GM12878 (cell line): ENCODE measurements at regions of chr17 and their contacts with region 1.

Region 1: DNA sequence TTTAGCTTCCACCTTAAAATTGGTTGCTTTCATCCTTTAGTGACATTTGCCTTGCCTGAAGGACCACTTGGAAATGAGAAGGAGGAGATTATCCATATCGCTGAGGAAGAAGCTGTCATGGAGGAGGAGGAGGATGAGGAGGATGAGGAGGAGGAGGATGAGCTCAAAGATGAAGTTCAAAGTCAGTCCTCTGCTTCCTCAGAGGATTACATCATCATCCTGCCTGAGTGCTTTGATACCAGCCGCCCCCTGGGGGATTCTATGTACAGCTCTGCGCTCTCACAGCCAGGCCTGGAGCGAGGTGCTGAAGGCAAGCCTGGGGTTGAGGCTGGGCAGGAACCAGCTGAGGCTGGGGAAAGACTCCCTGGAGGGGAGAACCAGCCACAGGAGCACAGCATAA is 11.5 kb upstream of the TMEM106A start:
- DNase-seq: no peak
- ATAC-seq: no peak
- H3K4me3 ChIP-seq: no peak overlapping the region
- H3K27ac ChIP-seq: no peak overlapping the region
- H3K4me1 ChIP-seq: no peaks in the 10 kb centered on the region
- H3K27me3 ChIP-seq: no peaks in the 10 kb centered on the region
- CTCF ChIP-seq: no peak
- EP300 ChIP-seq: no peak
- POLR2A ChIP-seq: no peak
- RAD21 ChIP-seq: no peak

Region 2: GRCh38 chr17:43033948-43034881 is 165.9 kb before region 1 on chr17:
- CTCF ChIA-PET with region 1: no interaction called
- POLR2A ChIA-PET with region 1: no interaction called
- RAD21 ChIA-PET with region 1: no interaction called
- SMC1A ChIA-PET with region 1: no interaction called
- in situ Hi-C with region 1: no loop called
- intact Hi-C with region 1: no loop called
- DNase-seq: no peak
- ATAC-seq: no peak
- H3K4me3 ChIP-seq: no peak overlapping the region
- H3K27ac ChIP-seq: no peak overlapping the region
- H3K4me1 ChIP-seq: no peaks in the 10 kb centered on the region
- H3K27me3 ChIP-seq: no peaks in the 10 kb centered on the region
- CTCF ChIP-seq: no peak
- EP300 ChIP-seq: no peak
- POLR2A ChIP-seq: no peak
- RAD21 ChIP-seq: no peak

Region 3: GRCh38 chr17:43151880-43152456 is 48.2 kb before region 1 on chr17:
- CTCF ChIA-PET with region 1: no interaction called
- POLR2A ChIA-PET with region 1: no interaction called
- RAD21 ChIA-PET with region 1: no interaction called
- SMC1A ChIA-PET with region 1: no interaction called
- in situ Hi-C with region 1: loop called (anchors 10 kb)
- intact Hi-C with region 1: no loop called
- DNase-seq: no peak
- ATAC-seq: peak; percentile 32; the same call in 1 of the 3 replicates
- H3K4me3 ChIP-seq: no peak overlapping the region
- H3K27ac ChIP-seq: no peak overlapping the region
- H3K4me1 ChIP-seq: no peaks in the 10 kb centered on the region
- H3K27me3 ChIP-seq: no peaks in the 10 kb centered on the region
- CTCF ChIP-seq: no peak
- EP300 ChIP-seq: no peak
- POLR2A ChIP-seq: no peak
- RAD21 ChIP-seq: no peak

Region 4: GRCh38 chr17:43546319-43547188 is 346.4 kb after region 1 on chr17 and contains the start of gene ETV4:
- CTCF ChIA-PET with region 1: no interaction called
- POLR2A ChIA-PET with region 1: no interaction called
- RAD21 ChIA-PET with region 1: no interaction called
- SMC1A ChIA-PET with region 1: no interaction called
- in situ Hi-C with region 1: no loop called
- intact Hi-C with region 1: no loop called
- DNase-seq: peak; percentile 55
- ATAC-seq: peak; percentile 93
- H3K4me3 ChIP-seq: peak within 1 kb of the TSS; percentile 74
- H3K27ac ChIP-seq: no peak within 1 kb of the TSS
- H3K4me1 ChIP-seq: peaks cover 3% of the 10 kb centered on the region; the same call in 1 of the 2 replicates
- H3K27me3 ChIP-seq: peaks cover 0 to 4% of the 10 kb centered on the region in 2 experiments; a peak in 2 of 4 replicates
- CTCF ChIP-seq: no peak
- EP300 ChIP-seq: no peak
- POLR2A ChIP-seq: no peak; the same call in 1 of the 2 replicates
- RAD21 ChIP-seq: no peak
- polyA plus RNA-seq, gene ETV4: 0.19 to 0.49 TPM

Region 5: GRCh38 chr17:43840814-43841213 is 640.7 kb after region 1 on chr17:
- CTCF ChIA-PET with region 1: no interaction called
- POLR2A ChIA-PET with region 1: no interaction called
- RAD21 ChIA-PET with region 1: no interaction called
- SMC1A ChIA-PET with region 1: no interaction called
- in situ Hi-C with region 1: no loop called
- intact Hi-C with region 1: no loop called
- DNase-seq: no peak
- ATAC-seq: peak; percentile 51
- H3K4me3 ChIP-seq: no peak overlapping the region
- H3K27ac ChIP-seq: no peak overlapping the region
- H3K4me1 ChIP-seq: no peaks in the 10 kb centered on the region
- H3K27me3 ChIP-seq: no peaks in the 10 kb centered on the region; a peak in 1 of 4 replicates
- CTCF ChIP-seq: peak in 2 of 3 experiments; percentile 7 to 11; a peak in 1 of 6 replicates
- EP300 ChIP-seq: no peak
- POLR2A ChIP-seq: no peak
- RAD21 ChIP-seq: no peak